IMR-90 (cell line): ENCODE measurements at regions of chr12 and their contacts with region 1.

Region 1: DNA sequence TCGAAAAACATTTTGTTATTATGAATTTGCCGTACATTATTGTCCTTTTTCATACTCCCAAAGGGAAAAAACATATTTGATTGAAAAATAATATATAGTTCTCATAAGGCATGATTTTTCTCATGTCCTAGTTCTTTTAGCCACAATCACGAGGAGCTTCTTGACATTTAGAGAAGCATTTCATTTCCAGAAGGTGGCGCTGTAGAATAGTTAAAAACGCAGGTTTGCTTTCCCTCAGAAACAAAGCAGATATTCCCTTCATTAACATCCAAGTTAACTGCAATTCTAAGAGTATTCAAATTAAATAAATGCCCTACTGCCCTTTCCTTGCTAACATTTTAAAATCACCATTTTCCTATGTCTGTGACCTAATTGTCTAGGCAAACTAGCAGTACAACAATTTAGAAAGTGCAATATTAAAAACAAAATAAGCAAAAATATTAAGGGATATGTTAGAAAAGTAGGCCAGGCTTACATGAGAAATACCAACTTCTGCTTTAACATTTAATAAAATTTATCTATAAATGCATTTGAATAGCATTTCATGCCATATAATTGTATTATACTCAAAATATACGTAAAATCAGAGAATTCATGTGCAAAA is 10.9 kb upstream of the PIK3C2G start:
- DNase-seq: peak; percentile 76
- ATAC-seq: peak; percentile 48; the same call in 1 of the 2 replicates
- H3K4me3 ChIP-seq: no peak overlapping the region
- H3K27ac ChIP-seq: no peak overlapping the region
- H3K4me1 ChIP-seq: no peaks in the 10 kb centered on the region
- H3K27me3 ChIP-seq: no peaks in the 10 kb centered on the region
- CTCF ChIP-seq: peak; percentile 78
- POLR2A ChIP-seq: no peak
- RAD21 ChIP-seq: peak; percentile 78

Region 2: DNA sequence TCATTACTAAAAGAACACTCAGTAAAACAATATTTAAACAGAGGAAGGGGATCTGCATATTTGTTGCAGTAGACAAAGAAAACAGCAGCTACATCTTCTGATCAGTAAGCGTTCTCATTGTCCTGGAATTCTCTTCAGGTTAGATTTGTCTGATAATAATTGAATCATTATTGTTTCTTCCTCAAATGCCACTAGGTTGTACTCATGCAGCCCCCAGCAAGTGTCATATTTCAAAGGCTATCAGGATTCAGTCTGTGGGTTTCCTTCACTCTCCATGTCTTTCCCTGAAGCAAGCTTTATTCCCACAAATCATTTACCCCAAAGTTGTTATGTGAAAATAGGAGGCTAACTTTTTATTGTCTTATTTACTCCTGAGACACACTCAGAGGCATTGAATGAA is 25.6 kb after region 1 on chr12:
- CTCF ChIA-PET with region 1: no interaction called
- POLR2A ChIA-PET with region 1: no interaction called
- dilution Hi-C with region 1: no loop called
- in situ Hi-C with region 1: no loop called
- intact Hi-C with region 1: no loop called
- DNase-seq: peak; percentile 22
- ATAC-seq: no peak
- H3K4me3 ChIP-seq: no peak overlapping the region
- H3K27ac ChIP-seq: no peak overlapping the region
- H3K4me1 ChIP-seq: peaks cover 3% of the 10 kb centered on the region; the same call in 1 of the 2 replicates
- H3K27me3 ChIP-seq: no peaks in the 10 kb centered on the region
- CTCF ChIP-seq: no peak
- POLR2A ChIP-seq: no peak
- RAD21 ChIP-seq: no peak

Region 3: GRCh38 chr12:19288603-19289244 is 1038.3 kb after region 1 on chr12:
- CTCF ChIA-PET with region 1: no interaction called
- POLR2A ChIA-PET with region 1: no interaction called
- dilution Hi-C with region 1: no loop called
- in situ Hi-C with region 1: no loop called
- intact Hi-C with region 1: loop called (anchors 10 kb)
- DNase-seq: peak; percentile 44
- ATAC-seq: 0 out of 2 replicates have a peak, but pooled peaks have one; percentile 46
- H3K4me3 ChIP-seq: no peak overlapping the region
- H3K27ac ChIP-seq: no peak overlapping the region
- H3K4me1 ChIP-seq: no peaks in the 10 kb centered on the region
- H3K27me3 ChIP-seq: no peaks in the 10 kb centered on the region
- CTCF ChIP-seq: peak; percentile 65
- POLR2A ChIP-seq: no peak
- RAD21 ChIP-seq: peak; percentile 69